MCF 10A (cell line): ENCODE measurements at regions of chr3 and their contacts with region 1.

Region 1: DNA sequence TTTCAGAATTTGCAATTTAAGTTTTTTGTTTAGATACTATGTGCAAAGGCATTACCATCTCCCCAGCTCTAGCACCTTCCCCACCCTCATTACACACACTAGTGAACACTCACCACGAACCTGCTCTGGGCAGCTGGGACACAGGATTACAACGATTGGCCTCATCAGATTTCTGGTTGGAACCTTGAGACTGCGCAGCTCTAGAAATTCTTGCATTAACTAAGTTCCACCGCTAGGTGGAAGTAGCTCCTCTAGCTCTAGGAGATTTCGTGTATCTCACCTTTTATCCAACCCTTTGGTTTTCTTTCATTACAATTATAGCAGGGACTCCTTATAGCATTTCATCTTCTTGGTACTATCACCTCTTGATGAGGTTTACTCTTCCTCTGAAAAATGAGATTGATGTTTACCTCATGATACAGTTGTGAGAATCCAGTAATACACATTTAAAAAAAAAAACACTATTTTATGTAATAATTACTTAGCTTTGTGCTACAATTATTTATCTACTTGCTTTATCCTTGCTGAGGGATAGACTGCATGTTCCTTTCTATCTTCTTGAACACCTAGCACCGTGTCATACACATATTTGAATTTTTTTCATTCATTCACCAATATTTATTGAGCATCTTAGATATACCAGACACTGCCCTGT is 28.7 kb upstream of the PLOD2 start:
- DNase-seq: peak; percentile 75
- H3K4me3 Mint-ChIP-seq: peak overlapping the region; percentile 22
- H3K27ac Mint-ChIP-seq: no peak overlapping the region
- H3K4me1 Mint-ChIP-seq: peaks cover 21% of the 10 kb centered on the region
- H3K27me3 Mint-ChIP-seq: no peaks in the 10 kb centered on the region
- CTCF ChIP-seq: peak; percentile 48

Region 2: DNA sequence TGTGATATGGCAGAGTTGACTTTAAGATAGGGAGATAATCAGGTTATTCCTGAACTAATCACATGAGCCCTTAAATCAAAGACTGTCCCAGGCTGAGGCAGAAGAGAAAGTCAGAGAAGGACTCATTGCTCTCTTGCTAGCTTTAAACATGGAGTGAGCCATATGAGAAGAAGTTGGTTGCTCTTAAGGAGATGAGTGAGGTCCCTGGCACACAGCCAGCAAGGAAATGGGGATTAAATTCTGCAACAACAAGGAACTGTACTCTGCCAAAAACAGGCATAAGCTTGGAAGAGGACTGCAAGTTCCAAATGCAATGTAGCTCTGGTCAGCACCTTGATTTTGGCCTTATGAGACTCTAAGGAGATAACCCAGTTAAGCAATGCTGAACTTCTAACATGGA is 485.6 kb before region 1 on chr3:
- CTCF ChIA-PET with region 1: no interaction called
- POLR2A ChIA-PET with region 1: no interaction called
- intact Hi-C with region 1: no loop called
- DNase-seq: peak; percentile 49
- H3K4me3 Mint-ChIP-seq: no peak overlapping the region
- H3K27ac Mint-ChIP-seq: no peak overlapping the region
- H3K4me1 Mint-ChIP-seq: no peaks in the 10 kb centered on the region
- H3K27me3 Mint-ChIP-seq: no peaks in the 10 kb centered on the region
- CTCF ChIP-seq: no peak

Region 3: DNA sequence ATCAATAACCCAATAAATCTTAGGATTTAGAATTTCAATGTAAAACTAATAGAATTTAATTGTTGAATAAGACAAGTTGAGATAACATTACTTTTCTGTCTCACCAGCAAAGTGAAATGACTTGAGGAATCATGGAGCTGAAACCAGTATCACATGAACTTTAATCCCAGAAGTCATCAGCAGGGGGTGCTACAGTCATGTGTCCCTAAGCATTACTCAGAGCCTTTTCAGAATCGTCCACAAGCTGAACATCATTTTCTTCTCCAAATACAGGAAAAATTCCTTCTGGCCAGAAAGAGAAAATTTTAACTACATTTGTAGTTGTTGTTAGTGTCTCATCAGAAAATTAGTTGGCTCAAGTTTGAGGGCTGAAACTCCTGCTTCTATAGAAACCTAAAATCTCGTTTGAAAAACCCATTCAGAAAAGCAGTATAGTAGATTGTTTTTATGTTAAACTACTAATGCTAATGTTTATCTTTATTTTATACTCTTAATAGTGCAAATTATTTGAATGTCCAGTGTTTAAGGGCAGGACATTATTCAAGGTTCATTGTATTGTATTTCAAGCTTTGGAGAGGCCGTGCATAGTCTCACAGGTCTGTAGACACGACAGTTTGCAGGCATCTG is 412.8 kb before region 1 on chr3:
- CTCF ChIA-PET with region 1: interaction called, 23 read pairs
- POLR2A ChIA-PET with region 1: no interaction called
- intact Hi-C with region 1: loop called (anchors 1 kb)
- DNase-seq: peak; percentile 78
- H3K4me3 Mint-ChIP-seq: no peak overlapping the region
- H3K27ac Mint-ChIP-seq: no peak overlapping the region
- H3K4me1 Mint-ChIP-seq: no peaks in the 10 kb centered on the region
- H3K27me3 Mint-ChIP-seq: peaks cover 68% of the 10 kb centered on the region
- CTCF ChIP-seq: peak; percentile 78

Region 4: GRCh38 chr3:146065573-146066006 is 124.1 kb before region 1 on chr3:
- CTCF ChIA-PET with region 1: interaction called, 207 read pairs
- POLR2A ChIA-PET with region 1: interaction called, 16 read pairs
- intact Hi-C with region 1: loop called (anchors 1 kb)
- DNase-seq: peak; percentile 69
- H3K4me3 Mint-ChIP-seq: no peak overlapping the region
- H3K27ac Mint-ChIP-seq: no peak overlapping the region
- H3K4me1 Mint-ChIP-seq: peaks cover 9% of the 10 kb centered on the region
- H3K27me3 Mint-ChIP-seq: no peaks in the 10 kb centered on the region
- CTCF ChIP-seq: peak; percentile 72

Region 5: GRCh38 chr3:146156095-146156494 is 33.6 kb before region 1 on chr3:
- CTCF ChIA-PET with region 1: interaction called, 45 read pairs
- POLR2A ChIA-PET with region 1: interaction called, 26 read pairs
- intact Hi-C with region 1: loop called (anchors 1 kb)
- DNase-seq: peak; percentile 47
- H3K4me3 Mint-ChIP-seq: peak overlapping the region; percentile 86
- H3K27ac Mint-ChIP-seq: peak overlapping the region; percentile 86
- H3K4me1 Mint-ChIP-seq: peaks cover 21% of the 10 kb centered on the region
- H3K27me3 Mint-ChIP-seq: no peaks in the 10 kb centered on the region
- CTCF ChIP-seq: no peak

Region 6: DNA sequence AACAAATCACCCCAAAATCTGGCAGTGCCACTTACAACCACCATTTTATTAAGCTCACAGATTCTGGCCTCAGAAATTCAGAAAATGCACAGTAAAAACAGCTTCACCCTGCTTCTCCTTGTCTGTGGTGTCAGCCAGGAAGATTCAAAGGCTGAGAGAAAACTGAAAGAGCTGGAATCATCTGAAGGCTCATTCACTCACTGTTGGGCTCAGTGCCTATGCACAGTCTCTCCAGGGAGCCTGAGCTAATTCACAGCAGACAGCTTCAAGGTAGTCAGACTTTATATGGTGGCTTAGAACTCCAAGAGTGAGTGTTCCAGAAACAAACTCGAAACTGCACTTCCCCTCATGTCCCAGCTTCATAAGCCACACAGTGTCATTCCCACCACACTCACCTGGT is 12.1 kb before region 1 on chr3:
- CTCF ChIA-PET with region 1: interaction called, 33 read pairs
- POLR2A ChIA-PET with region 1: no interaction called
- intact Hi-C with region 1: no loop called
- DNase-seq: no peak
- H3K4me3 Mint-ChIP-seq: no peak overlapping the region
- H3K27ac Mint-ChIP-seq: no peak overlapping the region
- H3K4me1 Mint-ChIP-seq: peaks cover 6% of the 10 kb centered on the region
- H3K27me3 Mint-ChIP-seq: no peaks in the 10 kb centered on the region
- CTCF ChIP-seq: no peak

Region 7: DNA sequence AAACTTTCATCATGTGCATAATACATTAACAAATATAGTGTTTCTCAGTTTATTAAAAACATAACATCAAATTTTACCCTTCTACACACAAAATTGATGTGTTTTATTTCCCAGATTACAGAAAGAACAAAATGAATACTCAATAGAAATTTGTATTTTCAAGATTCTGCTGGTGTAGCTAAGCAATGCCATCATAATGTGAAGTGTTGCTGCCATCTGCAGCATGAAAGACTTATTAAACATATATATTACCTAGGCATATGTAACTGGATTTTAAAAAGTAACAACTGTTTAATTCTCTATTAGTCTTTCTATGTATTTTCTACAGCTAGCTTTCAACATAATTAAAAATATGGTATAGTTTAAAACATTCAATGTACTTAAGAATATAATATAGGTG is 388.0 kb after region 1 on chr3:
- CTCF ChIA-PET with region 1: interaction called, 43 read pairs
- POLR2A ChIA-PET with region 1: interaction called, 6 read pairs
- intact Hi-C with region 1: loop called (anchors 1 kb)
- DNase-seq: peak; percentile 60
- H3K4me3 Mint-ChIP-seq: no peak overlapping the region
- H3K27ac Mint-ChIP-seq: no peak overlapping the region
- H3K4me1 Mint-ChIP-seq: peaks cover 15% of the 10 kb centered on the region
- H3K27me3 Mint-ChIP-seq: no peaks in the 10 kb centered on the region
- CTCF ChIP-seq: peak; percentile 49